Stomach (tissue), 19 donors: ENCODE measurements at regions of chr14 and their contacts with region 1.

Region 1: GRCh38 chr14:58239244-58240195 is 5.1 kb upstream of the PSMA3 start:
- DNase-seq: peak; percentile 82 to 88
- H3K4me3 ChIP-seq: peak overlapping the region; percentile 44 to 59 (median 48)
- H3K27ac ChIP-seq: peak overlapping the region; percentile 71 to 85 (median 80)
- H3K4me1 ChIP-seq: peaks cover 0 to 27% (median 12%) of the 10 kb centered on the region in 4 donors
- H3K27me3 ChIP-seq: no peaks in the 10 kb centered on the region
- CTCF ChIP-seq: no peak
- EP300 ChIP-seq: no peak
- POLR2A ChIP-seq: no peak

Region 2: DNA sequence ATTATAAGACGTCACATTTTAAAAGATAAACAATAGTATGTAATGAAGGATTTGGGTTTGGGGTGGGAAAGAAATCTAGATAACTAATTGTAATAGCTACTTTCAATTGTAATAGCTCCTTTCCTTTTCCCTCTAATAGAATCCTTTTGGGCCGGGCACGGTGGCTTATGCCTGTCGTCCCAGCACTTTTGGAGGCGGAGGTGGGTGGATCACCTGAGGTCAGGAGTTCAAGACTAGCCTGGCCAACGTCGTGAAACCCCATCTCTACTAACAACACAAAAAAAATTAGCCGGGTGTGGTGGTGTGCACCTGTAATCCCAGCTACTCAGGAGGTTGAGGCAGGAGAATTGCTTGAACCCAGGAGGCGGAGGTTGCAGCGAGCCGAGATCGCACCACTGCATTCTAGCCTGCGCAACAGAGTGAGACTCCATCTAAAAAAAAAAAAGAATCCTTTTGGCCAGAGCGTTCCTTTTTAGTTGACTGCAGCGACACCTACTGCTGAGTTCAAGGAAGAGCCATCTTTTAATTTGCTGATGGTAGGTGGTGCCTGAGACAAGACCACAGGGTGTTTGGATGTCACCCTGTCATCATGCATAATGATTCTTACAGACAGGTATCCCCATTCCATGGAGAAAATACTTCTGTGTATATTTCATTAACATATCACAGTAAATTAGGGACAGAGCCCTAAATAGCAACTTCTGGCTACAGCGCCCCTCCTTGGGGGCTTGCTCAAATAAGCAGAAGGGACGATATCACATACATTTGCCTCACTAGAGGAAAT is 167.0 kb before region 1 on chr14:
- intact Hi-C with region 1: no loop called
- DNase-seq: peak; percentile 33 to 88
- H3K4me3 ChIP-seq: peak overlapping the region in 3 of 4 donors; percentile 22 to 32 (median 29)
- H3K27ac ChIP-seq: no peak overlapping the region
- H3K4me1 ChIP-seq: peaks cover 0 to 14% (median 6%) of the 10 kb centered on the region in 4 donors
- H3K27me3 ChIP-seq: no peaks in the 10 kb centered on the region
- CTCF ChIP-seq: peak in 5 of 7 experiments; percentile 52 to 68 (median 66)
- EP300 ChIP-seq: no peak
- POLR2A ChIP-seq: no peak

Region 3: GRCh38 chr14:58138031-58138713 is 101.3 kb before region 1 on chr14:
- intact Hi-C with region 1: no loop called
- DNase-seq: peak in 1 of 2 donors; percentile 12
- H3K4me3 ChIP-seq: no peak overlapping the region
- H3K27ac ChIP-seq: no peak overlapping the region
- H3K4me1 ChIP-seq: no peaks in the 10 kb centered on the region
- H3K27me3 ChIP-seq: no peaks in the 10 kb centered on the region
- CTCF ChIP-seq: no peak
- EP300 ChIP-seq: no peak
- POLR2A ChIP-seq: no peak

Region 4: GRCh38 chr14:58297762-58298476 is 58.4 kb after region 1 on chr14:
- intact Hi-C with region 1: loop called (anchors 10 kb)
- DNase-seq: peak; percentile 98 to 100
- H3K4me3 ChIP-seq: peak overlapping the region; percentile 77 to 97 (median 94)
- H3K27ac ChIP-seq: peak overlapping the region; percentile 91 to 98 (median 93)
- H3K4me1 ChIP-seq: peaks cover 26 to 71% (median 43%) of the 10 kb centered on the region in 4 donors
- H3K27me3 ChIP-seq: no peaks in the 10 kb centered on the region
- CTCF ChIP-seq: no peak
- EP300 ChIP-seq: no peak
- POLR2A ChIP-seq: peak in 1 of 4 donors; percentile 68

Region 5: DNA sequence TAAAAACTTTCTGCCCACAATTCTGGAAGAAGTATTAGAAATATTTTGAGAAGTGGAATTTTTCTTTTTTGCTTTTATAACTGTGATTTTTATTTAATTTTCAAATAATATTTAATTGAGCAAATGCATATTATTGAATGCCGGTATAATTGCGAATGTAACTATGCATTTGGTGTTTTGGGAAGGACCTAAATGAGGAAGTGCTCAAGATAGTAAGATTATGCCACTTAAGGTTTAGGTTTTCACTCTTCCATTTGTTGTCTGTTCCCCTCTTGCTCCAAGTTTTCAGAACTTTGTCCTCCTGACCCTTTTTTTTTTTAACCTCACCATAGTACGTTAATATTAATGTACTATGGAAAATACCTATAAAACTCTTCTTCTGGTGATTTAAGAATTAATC is 273.8 kb after region 1 on chr14:
- intact Hi-C with region 1: no loop called
- DNase-seq: no peak
- H3K4me3 ChIP-seq: no peak overlapping the region
- H3K27ac ChIP-seq: no peak overlapping the region
- H3K4me1 ChIP-seq: peaks cover 0 to 4% (median 0%) of the 10 kb centered on the region in 4 donors
- H3K27me3 ChIP-seq: no peaks in the 10 kb centered on the region
- CTCF ChIP-seq: no peak
- EP300 ChIP-seq: no peak
- POLR2A ChIP-seq: no peak

Region 6: GRCh38 chr14:58978343-58978742 is 738.8 kb after region 1 on chr14:
- intact Hi-C with region 1: no loop called
- DNase-seq: peak in 1 of 2 donors; percentile 72
- H3K4me3 ChIP-seq: no peak overlapping the region
- H3K27ac ChIP-seq: no peak overlapping the region
- H3K4me1 ChIP-seq: peaks cover 0 to 11% (median 0%) of the 10 kb centered on the region in 4 donors
- H3K27me3 ChIP-seq: no peaks in the 10 kb centered on the region
- CTCF ChIP-seq: no peak
- EP300 ChIP-seq: no peak
- POLR2A ChIP-seq: no peak